ENCODE measurements at regions of chr11 and their contacts with region 1.

Region 1: DNA sequence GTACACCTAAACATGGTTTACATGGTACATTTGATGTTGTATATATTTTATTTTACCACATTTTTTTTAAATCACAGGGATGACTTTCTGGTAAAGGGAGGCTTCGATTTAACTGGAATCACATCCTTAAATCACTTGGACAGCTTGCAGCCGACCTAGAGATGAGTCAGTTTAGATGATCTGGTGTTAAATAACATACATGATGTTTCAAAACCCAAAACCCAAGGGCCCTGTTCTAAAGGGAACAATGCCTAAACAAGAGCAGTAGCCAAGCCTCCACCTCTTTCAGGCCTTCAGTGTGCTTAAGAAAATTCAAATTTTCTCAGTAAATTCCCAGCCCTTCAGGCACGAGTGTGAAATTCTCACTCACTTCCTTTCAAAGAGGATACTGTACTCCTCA is 108.8 kb downstream of the WT1 start:
- DNase-seq: no peak
- ATAC-seq: no peak
- H3K4me3 ChIP-seq: no peak overlapping the region
- H3K27ac ChIP-seq: no peak overlapping the region
- H3K4me1 ChIP-seq: no peaks in the 10 kb centered on the region
- H3K27me3 ChIP-seq: peaks cover 0 to 18% (median 6%) of the 10 kb centered on the region in 9 donors
- CTCF ChIP-seq: no peak
- POLR2A ChIP-seq: no peak

Region 2: DNA sequence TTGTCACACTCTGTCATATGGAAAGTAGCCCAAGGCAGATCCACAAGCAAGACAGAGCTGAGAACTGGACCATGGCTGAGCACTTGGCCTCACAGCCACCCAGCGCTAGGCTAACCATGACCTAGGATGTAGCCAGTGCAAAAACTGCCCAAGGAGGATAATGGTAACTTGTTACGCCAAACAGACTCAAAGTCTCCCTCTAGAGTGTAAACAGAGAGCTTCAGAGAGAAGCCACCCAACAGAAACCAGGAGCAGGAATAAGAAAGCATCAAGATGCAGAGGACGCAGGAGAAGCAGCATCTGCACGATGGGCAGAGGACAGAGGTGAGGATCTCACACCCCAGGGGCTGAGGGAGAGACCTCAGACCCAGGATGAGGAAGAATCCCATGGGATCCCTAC is 137.7 kb before region 1 on chr11:
- intact Hi-C with region 1: no loop called
- DNase-seq: no peak
- ATAC-seq: no peak
- H3K4me3 ChIP-seq: no peak overlapping the region
- H3K27ac ChIP-seq: no peak overlapping the region
- H3K4me1 ChIP-seq: peaks cover 0 to 6% (median 0%) of the 10 kb centered on the region in 12 donors
- H3K27me3 ChIP-seq: peaks cover 0 to 6% (median 0%) of the 10 kb centered on the region in 9 donors
- CTCF ChIP-seq: no peak
- POLR2A ChIP-seq: no peak

Region 3: GRCh38 chr11:32562839-32563599 is 236.5 kb after region 1 on chr11:
- intact Hi-C with region 1: loop called in 1 of 10 experiments (anchors 10 kb)
- DNase-seq: no peak
- ATAC-seq: no peak
- H3K4me3 ChIP-seq: no peak overlapping the region
- H3K27ac ChIP-seq: no peak overlapping the region
- H3K4me1 ChIP-seq: no peaks in the 10 kb centered on the region
- H3K27me3 ChIP-seq: no peaks in the 10 kb centered on the region
- CTCF ChIP-seq: no peak
- POLR2A ChIP-seq: no peak

Region 4: GRCh38 chr11:32583459-32584271 is 257.1 kb after region 1 on chr11 and contains the start of gene EIF3M:
- intact Hi-C with region 1: loop called in 1 of 10 experiments (anchors 10 kb)
- DNase-seq: peak; percentile 97 to 99 (median 97)
- ATAC-seq: peak; percentile 100
- H3K4me3 ChIP-seq: peak within 1 kb of the TSS; percentile 60 to 96 (median 87)
- H3K27ac ChIP-seq: peak within 1 kb of the TSS; percentile 5 to 88 (median 82)
- H3K4me1 ChIP-seq: peaks cover 0 to 44% (median 25%) of the 10 kb centered on the region in 12 donors
- H3K27me3 ChIP-seq: peaks cover 0 to 7% (median 0%) of the 10 kb centered on the region in 9 donors
- CTCF ChIP-seq: peak in 1 of 12 donors; percentile 20
- POLR2A ChIP-seq: peak in 1 of 2 donors; percentile 50
- total RNA-seq, gene EIF3M: 143 to 269 (median 172) TPM

Region 5: GRCh38 chr11:32615422-32615821 is 288.9 kb after region 1 on chr11:
- intact Hi-C with region 1: loop called in 1 of 10 experiments (anchors 10 kb)
- DNase-seq: no peak
- ATAC-seq: no peak
- H3K4me3 ChIP-seq: no peak overlapping the region
- H3K27ac ChIP-seq: no peak overlapping the region
- H3K4me1 ChIP-seq: no peaks in the 10 kb centered on the region
- H3K27me3 ChIP-seq: no peaks in the 10 kb centered on the region
- CTCF ChIP-seq: peak in 4 of 12 donors; percentile 23 to 38 (median 36)
- POLR2A ChIP-seq: no peak

Region 6: DNA sequence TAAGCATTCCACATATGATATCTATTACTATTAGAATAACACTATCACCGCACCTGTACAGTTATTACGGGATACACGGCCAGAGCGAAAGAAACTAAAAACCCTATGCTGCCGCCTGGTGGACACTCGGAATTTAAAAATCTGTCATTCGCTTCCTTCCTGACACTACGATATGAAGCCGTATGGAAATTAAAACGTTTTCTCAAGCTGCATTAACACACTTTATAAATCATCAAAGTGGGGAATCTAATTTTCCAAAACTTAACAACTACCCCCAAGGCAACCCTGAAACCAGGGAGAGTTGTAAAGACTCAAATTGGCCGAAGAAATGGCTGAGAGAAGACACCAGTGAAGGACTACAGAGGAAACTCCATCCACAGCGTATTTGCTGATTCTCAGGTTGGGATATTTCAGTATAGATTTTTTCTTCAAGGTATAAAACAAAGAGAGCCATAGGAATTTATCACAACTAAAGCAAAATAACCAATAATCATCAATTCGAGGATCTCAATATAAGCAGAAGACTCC is 466.5 kb after region 1 on chr11:
- intact Hi-C with region 1: loop called (anchors 1 to 5 kb)
- DNase-seq: peak in 3 of 5 donors; percentile 28 to 59 (median 37)
- ATAC-seq: peak in 3 of 4 donors; percentile 52 to 72 (median 62)
- H3K4me3 ChIP-seq: peak overlapping the region in 2 of 12 donors; percentile 21 to 29
- H3K27ac ChIP-seq: no peak overlapping the region
- H3K4me1 ChIP-seq: peaks cover 0 to 7% (median 0%) of the 10 kb centered on the region in 12 donors
- H3K27me3 ChIP-seq: peaks cover 0 to 18% (median 0%) of the 10 kb centered on the region in 9 donors
- CTCF ChIP-seq: peak; percentile 55 to 78 (median 66)
- POLR2A ChIP-seq: no peak

Measured in heart left ventricle (tissue), 16 donors.